Spleen (tissue), 13 donors: ENCODE measurements at regions of chr2 and their contacts with region 1.

Region 1: DNA sequence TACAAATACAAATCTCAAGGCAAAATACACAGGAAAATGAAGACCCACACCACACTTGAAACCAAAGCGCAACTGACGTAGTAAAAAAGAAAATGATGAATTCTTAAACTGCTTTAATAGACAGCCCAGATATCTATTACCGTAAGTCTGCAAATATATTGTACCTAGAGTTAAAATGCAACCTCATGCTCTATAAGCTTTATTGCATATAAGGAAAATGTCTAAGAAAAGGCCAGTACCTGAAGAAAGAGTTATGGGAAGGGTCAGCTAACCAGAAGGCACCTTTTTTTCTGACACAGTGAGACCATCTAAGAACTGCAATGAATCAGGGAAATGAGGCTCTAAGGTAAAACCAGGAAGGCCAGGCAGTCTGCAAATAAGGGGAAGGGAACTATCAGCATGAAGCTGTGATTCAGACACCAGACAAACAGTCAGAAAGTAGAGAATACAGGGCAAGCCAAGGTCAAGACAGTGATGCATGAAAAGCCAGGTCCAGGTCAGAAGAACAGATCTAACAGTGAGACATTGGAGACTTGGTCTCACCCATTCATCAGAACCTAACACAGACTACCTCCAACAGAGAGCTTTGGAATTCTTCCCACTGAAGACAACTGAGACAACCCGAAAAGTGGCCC is 46.9 kb downstream of the PDE11A start:
- DNase-seq: no peak
- H3K4me3 ChIP-seq: no peak overlapping the region
- H3K27ac ChIP-seq: no peak overlapping the region
- H3K4me1 ChIP-seq: no peaks in the 10 kb centered on the region
- H3K27me3 ChIP-seq: no peaks in the 10 kb centered on the region
- CTCF ChIP-seq: no peak
- POLR2A ChIP-seq: no peak

Region 2: GRCh38 chr2:178076130-178076529 is 50.5 kb after region 1 on chr2:
- intact Hi-C with region 1: loop called (anchors 2 kb)
- DNase-seq: no peak
- H3K4me3 ChIP-seq: no peak overlapping the region
- H3K27ac ChIP-seq: no peak overlapping the region
- H3K4me1 ChIP-seq: peaks cover 0 to 13% (median 7%) of the 10 kb centered on the region in 6 donors
- H3K27me3 ChIP-seq: peaks cover 0 to 47% (median 28%) of the 10 kb centered on the region in 7 donors
- CTCF ChIP-seq: no peak
- POLR2A ChIP-seq: no peak